Prostate gland (tissue), 2 donors: ENCODE measurements at regions of chr12 and their contacts with region 1.

Region 1: DNA sequence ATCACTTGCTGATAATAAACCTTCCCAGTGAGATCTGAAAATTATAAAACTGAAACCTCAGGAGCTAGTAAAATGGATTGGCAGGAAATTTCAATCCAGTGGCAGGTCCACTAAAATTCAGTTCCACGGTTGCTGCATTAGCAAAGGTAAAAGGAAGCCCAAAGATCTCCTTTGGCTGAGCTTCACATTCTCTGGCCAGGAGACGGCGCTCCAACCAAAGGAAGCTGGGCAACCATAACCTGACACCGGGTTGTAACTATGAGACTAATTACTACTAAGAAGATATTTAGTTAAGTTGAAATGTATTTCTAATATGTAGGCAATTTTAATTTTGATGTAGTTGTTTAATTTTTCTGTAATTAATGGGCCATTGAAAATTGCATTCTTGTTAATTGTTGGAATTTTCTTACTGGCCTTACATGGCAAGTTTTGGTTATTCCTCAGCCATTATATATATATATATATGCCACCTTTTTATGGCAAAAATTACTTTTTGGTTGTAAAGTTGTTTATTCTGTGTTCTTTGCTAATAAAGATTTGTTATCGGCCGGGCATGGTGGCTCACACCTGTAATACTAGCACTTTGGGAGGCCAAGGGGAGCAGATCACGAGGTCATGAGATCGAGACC is 17.0 kb downstream of the OR8S1 start:
- DNase-seq: no peak
- H3K4me3 ChIP-seq: no peak overlapping the region
- H3K27ac ChIP-seq: no peak overlapping the region
- H3K4me1 ChIP-seq: no peaks in the 10 kb centered on the region
- H3K27me3 ChIP-seq: no peaks in the 10 kb centered on the region
- CTCF ChIP-seq: peak in 2 of 4 experiments; percentile 9 to 48
- POLR2A ChIP-seq: no peak

Region 2: DNA sequence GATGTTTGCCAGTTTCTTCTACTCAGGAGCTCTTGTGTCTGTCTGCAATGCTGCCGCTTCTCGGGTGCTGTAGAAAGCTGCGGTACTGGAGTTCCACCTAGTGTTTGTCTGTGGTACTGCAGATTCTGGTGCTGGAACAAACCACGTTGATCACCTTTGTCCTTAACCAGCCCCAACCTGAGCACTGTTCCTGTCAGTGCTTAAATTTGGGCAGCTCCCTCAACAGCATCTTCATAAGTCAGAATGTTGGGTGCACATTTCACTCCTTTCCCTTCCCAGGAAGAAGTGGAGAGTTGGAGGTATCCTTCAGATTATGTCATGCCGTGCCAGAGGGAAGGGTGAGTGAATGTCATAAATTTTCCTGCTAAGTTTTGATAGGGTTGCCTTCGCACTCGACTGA is 76.1 kb after region 1 on chr12:
- intact Hi-C with region 1: loop called (anchors 10 kb)
- DNase-seq: peak; percentile 70
- H3K4me3 ChIP-seq: no peak overlapping the region
- H3K27ac ChIP-seq: no peak overlapping the region
- H3K4me1 ChIP-seq: no peaks in the 10 kb centered on the region
- H3K27me3 ChIP-seq: no peaks in the 10 kb centered on the region
- CTCF ChIP-seq: peak; percentile 86 to 96 (median 92)
- POLR2A ChIP-seq: no peak

Region 3: DNA sequence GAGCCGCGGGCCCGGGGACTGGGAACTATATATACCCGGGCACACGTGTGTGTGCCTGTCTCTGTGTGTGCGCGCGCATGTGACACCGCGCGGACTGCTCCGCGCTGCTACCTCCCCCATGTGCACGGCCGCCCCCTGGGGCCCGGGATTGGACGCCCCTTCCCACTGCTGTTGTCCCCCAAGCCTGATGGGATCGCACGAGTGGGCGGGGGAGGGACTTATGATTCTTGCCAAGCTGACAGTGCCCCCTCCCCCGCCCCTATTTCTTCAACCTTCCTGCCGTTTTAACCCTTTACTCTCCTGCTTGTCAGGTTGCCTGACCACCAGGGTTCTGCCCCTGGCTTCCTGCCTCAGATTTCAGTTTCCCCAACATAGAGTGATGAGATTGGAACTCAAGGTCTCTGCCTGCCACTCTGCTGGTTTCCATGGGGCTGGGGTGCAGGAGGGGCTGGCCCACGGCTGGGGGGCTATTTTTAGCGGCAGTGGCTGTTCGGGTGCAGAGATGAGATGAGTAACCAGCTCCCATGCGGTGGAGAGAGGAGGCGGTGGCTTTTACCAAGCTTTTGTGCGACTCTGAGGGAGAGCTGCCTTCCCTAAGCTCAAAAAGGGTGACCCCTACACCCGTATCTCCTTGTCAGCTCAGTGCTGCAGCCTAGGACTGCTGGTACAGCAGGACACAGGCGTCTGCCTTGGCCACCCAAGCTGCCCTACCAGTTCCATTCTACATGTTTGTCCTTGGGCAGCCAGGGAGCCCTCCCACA is 457.1 kb after region 1 on chr12 and contains the start of gene DDN:
- intact Hi-C with region 1: no loop called
- DNase-seq: no peak
- H3K4me3 ChIP-seq: peak within 1 kb of the TSS; percentile 25 to 31
- H3K27ac ChIP-seq: no peak within 1 kb of the TSS
- H3K4me1 ChIP-seq: peaks cover 19% of the 10 kb centered on the region
- H3K27me3 ChIP-seq: peaks cover 3% of the 10 kb centered on the region
- CTCF ChIP-seq: no peak
- POLR2A ChIP-seq: no peak
- total RNA-seq, gene DDN: 1.0 TPM in 1 of 2 donors, not detected in the other